BJ (cell line): ENCODE measurements at regions of chr6 and their contacts with region 1.

Region 1: DNA sequence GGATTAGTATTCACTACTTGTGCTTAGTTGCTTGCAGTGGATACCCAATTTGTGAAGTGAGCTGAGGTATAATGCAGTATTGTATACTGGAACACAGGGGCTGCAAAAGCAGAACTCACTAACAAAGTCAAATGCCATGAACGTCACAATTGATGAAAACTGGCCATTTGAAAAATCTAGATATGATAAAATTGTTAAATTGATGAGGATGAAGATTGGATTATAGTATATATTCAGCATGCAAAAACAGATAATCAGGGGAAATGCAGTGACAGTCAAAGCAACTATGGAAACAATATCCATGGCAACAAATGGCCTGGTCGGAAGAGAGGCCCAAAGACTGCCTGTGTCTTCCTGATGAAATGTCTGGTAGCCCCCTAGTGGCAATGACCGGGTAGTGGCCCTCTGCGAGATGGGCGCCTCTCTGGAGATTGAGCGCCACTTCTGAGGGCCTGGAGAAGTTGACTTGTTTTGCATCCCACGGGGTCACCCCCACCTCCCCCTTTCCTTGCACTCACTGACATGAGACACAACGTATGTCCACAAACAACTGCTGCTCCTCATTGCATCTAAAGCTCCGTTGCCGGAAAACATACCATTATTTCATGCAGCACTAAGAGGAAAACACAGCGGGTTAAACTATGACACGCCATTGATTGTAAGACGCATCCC is 43.6 kb downstream of the C6orf15 start:
- DNase-seq: no peak
- H3K4me3 ChIP-seq: no peak overlapping the region
- H3K27me3 ChIP-seq: peaks cover 3% of the 10 kb centered on the region; the same call in 1 of the 2 replicates
- CTCF ChIP-seq: peak; percentile 92

Region 2: GRCh38 chr6:30601815-30602641 is 466.8 kb before region 1 on chr6:
- CTCF ChIA-PET with region 1: no interaction called
- POLR2A ChIA-PET with region 1: no interaction called
- DNase-seq: no peak
- H3K4me3 ChIP-seq: no peak overlapping the region
- H3K27me3 ChIP-seq: no peaks in the 10 kb centered on the region
- CTCF ChIP-seq: no peak

Region 3: DNA sequence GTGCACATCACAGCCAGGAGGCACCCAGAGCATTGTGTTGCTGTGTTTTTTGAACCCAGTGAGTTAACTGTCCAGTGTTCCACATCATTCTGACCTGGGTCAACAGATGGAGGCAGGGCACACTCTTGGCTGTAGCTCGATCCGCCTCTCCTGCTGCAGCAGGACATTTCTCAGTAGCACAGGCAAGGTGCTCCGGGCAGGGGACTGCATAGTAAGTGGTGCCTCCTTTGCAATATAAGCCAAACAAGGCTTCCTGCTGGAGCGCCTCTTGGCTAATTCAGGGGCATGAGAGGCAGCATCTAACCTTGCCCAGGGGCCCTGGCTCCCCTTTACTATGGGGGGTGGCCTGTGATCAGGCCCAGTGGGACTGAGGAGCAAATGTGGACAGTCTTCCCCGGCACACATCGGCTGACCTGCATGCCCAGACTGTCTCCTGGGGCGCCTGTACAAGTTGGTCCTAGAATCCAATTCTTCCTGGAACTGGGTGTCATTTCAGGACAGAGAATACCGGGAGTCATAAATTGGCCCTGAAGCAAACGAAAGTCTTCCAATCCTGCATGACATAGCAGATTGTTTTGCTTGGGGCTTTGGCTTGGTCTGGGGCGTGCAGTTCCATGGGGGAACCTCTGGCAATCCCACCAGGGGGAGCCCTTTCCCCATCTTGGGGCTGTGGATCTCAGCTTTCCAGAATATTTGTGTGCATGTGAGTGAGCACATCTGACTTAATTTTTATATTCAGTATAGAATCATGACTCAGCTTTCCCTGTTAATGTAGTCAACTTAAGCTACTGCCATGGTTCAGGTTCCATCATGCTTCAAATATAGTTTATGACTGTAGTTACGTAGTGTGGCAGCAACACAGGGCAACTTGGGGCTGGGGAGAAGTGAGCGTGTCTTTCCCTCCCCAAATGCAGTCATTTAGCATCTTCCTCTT is 240.5 kb before region 1 on chr6:
- CTCF ChIA-PET with region 1: interaction called, 16 read pairs
- POLR2A ChIA-PET with region 1: no interaction called
- DNase-seq: peak; percentile 69
- H3K4me3 ChIP-seq: no peak overlapping the region
- H3K27me3 ChIP-seq: no peaks in the 10 kb centered on the region
- CTCF ChIP-seq: peak; percentile 92

Region 4: DNA sequence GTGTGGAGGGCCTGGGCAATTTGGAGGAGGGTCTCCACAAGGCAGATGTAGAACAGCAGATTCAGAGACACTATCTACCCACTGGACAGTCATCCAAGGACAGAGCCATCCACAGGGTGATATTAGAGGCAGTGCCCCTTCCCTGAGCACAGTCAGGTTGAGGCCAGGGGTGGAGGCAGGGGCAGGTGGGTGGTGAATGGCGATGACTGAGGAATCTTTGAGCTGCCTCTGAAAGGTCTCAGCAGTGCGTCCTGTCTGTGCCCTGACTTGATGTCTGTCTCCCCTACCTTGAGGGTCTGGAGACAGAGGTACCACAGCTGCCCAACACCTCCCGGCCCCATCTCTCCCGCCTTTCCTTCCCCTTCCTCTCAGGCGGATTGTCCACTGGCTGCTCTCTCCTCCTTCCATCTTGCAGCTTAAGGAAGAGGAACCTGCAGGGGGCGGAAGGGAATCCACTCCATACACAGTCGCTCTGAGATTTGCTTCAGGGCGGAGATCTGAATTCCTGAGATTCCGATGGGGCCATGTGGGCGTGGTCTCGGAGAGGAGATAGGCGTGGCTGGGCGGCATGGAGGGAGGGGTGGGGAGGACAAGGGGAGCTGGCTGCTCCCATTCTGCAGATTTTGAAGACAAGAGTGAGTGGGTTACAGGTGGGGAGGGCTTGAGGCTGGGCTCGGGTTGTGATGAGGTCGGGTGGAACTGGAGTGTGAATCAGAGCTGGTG is 126.3 kb before region 1 on chr6:
- CTCF ChIA-PET with region 1: interaction called, 39 read pairs
- POLR2A ChIA-PET with region 1: no interaction called
- DNase-seq: peak; percentile 35
- H3K4me3 ChIP-seq: no peak overlapping the region
- H3K27me3 ChIP-seq: peaks cover 10% of the 10 kb centered on the region
- CTCF ChIP-seq: peak; percentile 84

Region 5: DNA sequence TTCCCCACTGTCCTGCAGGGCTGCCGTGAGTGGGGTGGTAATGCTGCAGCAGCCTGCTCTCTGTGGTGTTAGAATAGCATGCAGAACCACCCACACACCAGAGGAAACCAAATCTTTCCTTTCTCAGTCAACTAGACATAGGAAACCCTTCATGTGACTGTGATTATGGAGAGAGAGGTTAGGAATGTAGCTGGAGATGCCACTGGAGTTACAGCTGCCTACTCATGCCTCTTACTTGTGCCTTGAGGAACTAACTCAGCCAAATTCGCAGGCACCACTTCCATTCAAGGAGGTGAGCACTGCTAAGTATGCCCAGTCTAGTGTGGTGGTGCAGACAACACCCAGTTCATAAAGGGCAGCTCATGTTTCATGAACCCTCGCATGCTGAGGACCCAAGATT is 31.1 kb before region 1 on chr6:
- CTCF ChIA-PET with region 1: interaction called, 23 read pairs
- POLR2A ChIA-PET with region 1: no interaction called
- DNase-seq: peak; percentile 39
- H3K4me3 ChIP-seq: no peak overlapping the region
- H3K27me3 ChIP-seq: no peaks in the 10 kb centered on the region; the same call in 1 of the 2 replicates
- CTCF ChIP-seq: no peak

Region 6: GRCh38 chr6:31049518-31049917 is 19.3 kb before region 1 on chr6:
- CTCF ChIA-PET with region 1: interaction called, 14 read pairs
- POLR2A ChIA-PET with region 1: no interaction called
- DNase-seq: no peak
- H3K4me3 ChIP-seq: no peak overlapping the region
- H3K27me3 ChIP-seq: peaks cover 3% of the 10 kb centered on the region
- CTCF ChIP-seq: no peak

Region 7: GRCh38 chr6:31058128-31058894 is 10.5 kb before region 1 on chr6:
- CTCF ChIA-PET with region 1: interaction called, 20 read pairs
- POLR2A ChIA-PET with region 1: no interaction called
- DNase-seq: peak; percentile 66
- H3K4me3 ChIP-seq: no peak overlapping the region
- H3K27me3 ChIP-seq: peaks cover 4% of the 10 kb centered on the region
- CTCF ChIP-seq: peak; percentile 63

Region 8: DNA sequence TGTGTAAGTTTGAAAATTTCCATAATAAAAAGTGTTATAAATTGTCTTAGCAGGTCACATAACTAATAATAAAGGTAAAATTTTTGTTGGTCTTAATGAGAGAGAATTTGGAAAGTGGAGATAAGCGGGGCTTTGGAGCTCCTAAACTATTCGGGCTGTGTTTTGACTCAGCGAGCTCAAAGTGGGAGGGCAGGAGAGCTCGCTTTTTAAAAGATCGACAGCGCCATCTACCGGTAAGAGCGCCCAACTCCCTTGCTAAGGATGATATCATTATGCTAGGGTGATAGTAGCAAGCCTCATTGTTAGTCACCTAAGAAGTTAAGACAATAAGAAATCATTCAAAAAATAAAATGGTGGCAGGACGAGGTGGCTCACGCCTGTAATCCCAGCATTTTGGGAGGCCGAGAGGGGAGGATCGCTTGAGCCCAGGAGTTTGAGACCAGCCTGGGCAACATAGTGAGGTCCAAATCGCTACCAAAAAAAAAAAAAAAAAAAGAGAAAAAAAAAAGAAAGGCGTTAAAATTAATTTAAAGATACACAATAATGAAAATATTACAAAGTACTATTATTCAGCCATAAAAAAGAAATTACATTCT is 18.8 kb after region 1 on chr6:
- CTCF ChIA-PET with region 1: interaction called, 34 read pairs
- POLR2A ChIA-PET with region 1: no interaction called
- DNase-seq: no peak
- H3K4me3 ChIP-seq: no peak overlapping the region
- H3K27me3 ChIP-seq: no peaks in the 10 kb centered on the region; the same call in 1 of the 2 replicates
- CTCF ChIP-seq: peak; percentile 69